ENCODE measurements at regions of chr9 and their contacts with region 1.

Region 1: DNA sequence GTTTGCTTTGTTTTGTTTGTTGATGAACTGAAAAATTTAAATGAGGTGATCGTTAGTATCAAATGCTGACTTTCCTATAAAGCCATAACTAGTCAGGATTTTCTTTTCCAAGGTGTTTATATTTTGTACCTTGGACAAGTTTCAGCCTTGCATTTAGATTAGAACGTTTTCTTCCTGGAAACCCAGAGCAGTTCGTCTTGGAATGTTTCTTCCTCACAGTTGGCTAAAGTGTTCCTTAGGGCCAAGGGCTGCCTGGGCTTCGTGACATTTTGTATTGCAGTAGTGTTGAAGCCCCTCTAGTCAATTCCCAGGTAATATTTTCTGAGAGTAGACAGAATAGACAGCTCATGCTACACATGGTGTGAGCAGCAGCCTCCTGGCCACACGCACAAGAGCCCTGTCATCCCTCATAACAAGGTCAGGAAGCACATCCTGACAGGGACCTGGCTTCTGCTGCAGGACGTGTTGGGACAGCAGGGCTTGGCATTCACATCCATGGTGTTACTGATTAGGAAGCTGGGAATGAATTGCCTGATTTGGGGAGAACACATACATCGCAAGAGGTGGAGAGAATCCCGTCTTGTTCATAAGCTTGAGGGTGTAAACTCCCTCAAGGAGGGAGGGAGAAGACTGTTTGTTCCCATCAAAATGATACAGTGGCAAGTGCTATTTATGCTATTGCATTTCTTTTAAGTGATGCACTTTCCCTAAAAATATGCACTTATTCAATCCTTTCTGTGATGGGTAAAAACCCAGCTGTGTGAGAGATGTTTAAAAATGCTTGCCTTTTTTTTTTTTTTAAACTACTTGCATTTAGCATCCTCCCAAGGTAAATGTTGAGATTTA is 31.7 kb downstream of the FUBP3 start:
- DNase-seq: no peak
- H3K4me3 ChIP-seq: no peak overlapping the region
- H3K27ac ChIP-seq: no peak overlapping the region
- H3K4me1 ChIP-seq: no peaks in the 10 kb centered on the region
- H3K27me3 ChIP-seq: no peaks in the 10 kb centered on the region
- CTCF ChIP-seq: no peak
- EP300 ChIP-seq: no peak
- POLR2A ChIP-seq: no peak

Region 2: GRCh38 chr9:130421802-130422276 is 189.2 kb before region 1 on chr9:
- intact Hi-C with region 1: no loop called
- DNase-seq: no peak
- H3K4me3 ChIP-seq: no peak overlapping the region
- H3K27ac ChIP-seq: no peak overlapping the region
- H3K4me1 ChIP-seq: no peaks in the 10 kb centered on the region
- H3K27me3 ChIP-seq: no peaks in the 10 kb centered on the region
- CTCF ChIP-seq: no peak
- EP300 ChIP-seq: no peak
- POLR2A ChIP-seq: no peak

Region 3: DNA sequence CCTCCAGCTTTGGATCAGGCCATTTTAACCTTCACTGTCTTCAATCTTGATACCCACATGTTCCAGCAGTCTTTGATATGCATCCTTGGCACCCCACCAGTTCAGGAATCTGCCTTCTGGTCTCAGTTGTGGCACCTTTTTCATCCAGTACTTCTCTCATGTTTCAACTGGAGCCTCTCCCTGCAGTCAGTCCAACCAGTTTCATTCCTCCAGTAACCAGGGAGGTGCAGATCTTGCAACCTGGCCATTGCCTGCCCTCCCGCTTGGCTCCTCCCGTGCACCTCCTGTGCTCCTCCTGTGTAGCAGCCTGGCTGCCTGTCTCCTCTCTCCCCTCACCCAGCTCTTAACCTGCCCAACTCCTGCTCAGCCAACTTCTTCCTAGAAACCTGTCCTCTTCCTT is 11.5 kb before region 1 on chr9:
- intact Hi-C with region 1: loop called in 1 of 4 experiments (anchors 2 kb)
- DNase-seq: no peak
- H3K4me3 ChIP-seq: no peak overlapping the region
- H3K27ac ChIP-seq: no peak overlapping the region
- H3K4me1 ChIP-seq: no peaks in the 10 kb centered on the region
- H3K27me3 ChIP-seq: no peaks in the 10 kb centered on the region
- CTCF ChIP-seq: no peak
- EP300 ChIP-seq: no peak
- POLR2A ChIP-seq: no peak

Measured in ovary (tissue), 10 donors.